Gastrocnemius medialis (tissue), 4 donors: ENCODE measurements at regions of chr7 and their contacts with region 1.

Region 1: GRCh38 chr7:90244909-90245851 is at the start of gene CFAP69:
- DNase-seq: peak; percentile 61 to 77
- ATAC-seq: peak; percentile 92 to 98
- H3K4me3 ChIP-seq: peak within 1 kb of the TSS; percentile 81 to 97 (median 92)
- H3K27ac ChIP-seq: peak within 1 kb of the TSS in 3 of 4 donors; percentile 21 to 57 (median 41)
- H3K4me1 ChIP-seq: peaks cover 6 to 19% of the 10 kb centered on the region in 2 donors
- H3K27me3 ChIP-seq: no peaks in the 10 kb centered on the region
- CTCF ChIP-seq: peak in 3 of 5 experiments; percentile 24 to 40 (median 39)
- POLR2A ChIP-seq: no peak
- total RNA-seq, gene CFAP69: 0.62 to 4.9 (median 1.6) TPM in 3 of 4 donors, not detected in the other

Region 2: GRCh38 chr7:90229682-90230081 is 15.5 kb before region 1 on chr7:
- in situ Hi-C with region 1: no loop called
- intact Hi-C with region 1: no loop called
- DNase-seq: no peak
- ATAC-seq: no peak
- H3K4me3 ChIP-seq: no peak overlapping the region
- H3K27ac ChIP-seq: no peak overlapping the region
- H3K4me1 ChIP-seq: no peaks in the 10 kb centered on the region
- H3K27me3 ChIP-seq: no peaks in the 10 kb centered on the region
- CTCF ChIP-seq: no peak
- POLR2A ChIP-seq: no peak

Region 3: DNA sequence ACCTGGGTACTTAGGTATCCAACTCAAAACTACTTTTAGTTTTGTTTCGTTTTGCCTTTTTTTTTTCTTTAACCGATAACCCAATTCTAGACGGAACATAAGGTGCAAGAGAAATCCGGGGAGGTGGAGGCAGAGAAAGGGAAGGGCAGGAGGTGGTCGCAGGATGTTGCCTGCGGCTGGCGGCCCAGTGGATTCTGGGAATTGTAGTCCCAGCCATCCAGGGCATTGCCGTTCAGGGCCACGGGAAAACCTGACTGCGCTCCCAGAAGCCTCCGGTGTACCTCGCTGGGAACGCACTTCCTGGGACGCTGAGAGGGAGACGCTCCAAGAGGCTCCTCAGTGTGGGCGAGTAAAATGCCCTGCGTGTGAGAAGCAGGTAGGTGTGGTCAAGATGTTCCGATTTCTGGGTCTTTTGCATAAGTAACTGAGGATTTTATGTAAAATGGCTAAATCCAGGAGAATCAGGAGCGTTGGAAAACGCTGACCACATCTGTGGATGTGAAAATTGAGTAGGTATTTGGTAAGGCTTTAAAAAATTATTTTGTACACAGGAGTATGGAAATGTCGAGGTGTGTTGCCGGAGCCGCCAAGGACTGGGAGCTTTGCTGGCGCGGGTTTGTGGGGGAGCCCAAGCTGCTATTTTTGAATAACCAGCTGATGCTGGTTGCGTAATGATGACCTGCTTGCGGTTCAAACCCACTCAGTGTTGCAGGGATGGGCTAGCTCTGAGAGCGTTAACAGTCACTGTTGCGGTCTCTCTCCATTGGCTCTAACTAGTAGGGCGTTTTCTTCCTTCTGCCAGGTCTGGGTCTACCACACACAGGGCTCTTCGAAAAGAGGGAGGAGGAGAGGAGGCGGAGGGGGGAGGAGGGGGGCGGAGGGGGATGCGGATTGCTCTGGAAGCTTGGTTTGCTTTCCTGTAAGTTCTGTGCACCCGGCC is 158.3 kb after region 1 on chr7 and contains the start of gene CLDN12:
- in situ Hi-C with region 1: loop called in 1 of 4 experiments (anchors 10 kb)
- intact Hi-C with region 1: loop called (anchors 5 kb)
- DNase-seq: peak; percentile 92
- ATAC-seq: peak; percentile 93
- H3K4me3 ChIP-seq: peak within 1 kb of the TSS; percentile 68 to 87 (median 78)
- H3K27ac ChIP-seq: peak within 1 kb of the TSS; percentile 93 to 99 (median 97)
- H3K4me1 ChIP-seq: peaks cover 23 to 29% of the 10 kb centered on the region in 2 donors
- H3K27me3 ChIP-seq: no peaks in the 10 kb centered on the region
- CTCF ChIP-seq: peak in 1 of 5 experiments; percentile 14
- POLR2A ChIP-seq: peak; percentile 76 to 77
- total RNA-seq, gene CLDN12: 9.5 to 39.9 (median 32.6) TPM